ENCODE measurements at regions of chr1 and their contacts with region 1.

Region 1: DNA sequence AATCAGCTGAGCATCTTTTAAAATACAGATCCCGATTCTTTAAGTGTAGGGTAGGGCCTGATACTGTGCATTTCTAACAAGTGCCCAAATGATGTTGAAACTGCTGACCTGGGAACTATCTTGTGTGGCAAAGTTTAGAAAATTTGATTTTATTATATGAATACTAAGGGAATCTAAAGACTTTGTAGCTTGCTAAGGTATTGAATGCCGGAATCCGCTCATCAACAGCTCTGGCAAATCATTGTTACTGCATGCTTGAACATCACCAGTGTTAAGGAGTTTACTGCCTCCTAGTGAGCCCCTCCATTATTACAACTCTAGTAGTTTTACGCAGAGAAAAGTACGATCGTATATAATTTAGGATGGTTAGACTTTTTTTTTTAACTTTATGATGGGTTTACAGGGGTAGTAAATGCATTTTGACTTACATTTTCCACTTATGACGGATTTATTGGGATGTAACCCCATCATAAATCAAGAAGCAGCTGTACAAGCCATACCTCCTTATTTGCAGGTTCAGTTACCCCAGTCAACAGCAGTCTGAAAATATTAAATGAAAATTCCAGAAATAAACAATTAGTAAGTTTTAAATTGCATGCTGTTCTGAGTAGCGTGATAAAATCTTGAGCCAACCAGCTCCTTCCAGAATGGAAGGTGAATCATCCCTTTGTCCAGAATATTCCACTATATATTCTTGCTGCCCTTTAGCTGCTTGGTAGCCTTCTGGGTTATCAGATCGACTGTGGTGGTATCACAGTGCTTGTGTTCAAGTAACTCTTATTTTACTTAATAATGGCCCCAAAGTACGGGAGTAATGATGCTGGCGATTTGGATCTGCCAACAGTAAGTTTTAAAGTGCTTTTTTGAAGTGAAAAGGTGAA is 892 bp downstream of the TYW3 start:
- DNase-seq: peak; percentile 43
- H3K4me3 Mint-ChIP-seq: peak overlapping the region; percentile 87
- H3K27ac Mint-ChIP-seq: peak overlapping the region; percentile 94
- H3K4me1 Mint-ChIP-seq: peaks cover 39% of the 10 kb centered on the region
- H3K27me3 Mint-ChIP-seq: no peaks in the 10 kb centered on the region

Region 2: GRCh38 chr1:74197657-74198552 is 535.9 kb before region 1 on chr1 and contains the starts of genes FPGT and LRRIQ3:
- CTCF ChIA-PET with region 1: interaction called, 3 read pairs
- POLR2A ChIA-PET with region 1: no interaction called
- intact Hi-C with region 1: loop called (anchors 1 kb)
- DNase-seq: peak; percentile 96
- H3K4me3 Mint-ChIP-seq: peak within 1 kb of the TSS; percentile 82
- H3K27ac Mint-ChIP-seq: peak within 1 kb of the TSS; percentile 86
- H3K4me1 Mint-ChIP-seq: peaks cover 18% of the 10 kb centered on the region
- H3K27me3 Mint-ChIP-seq: no peaks in the 10 kb centered on the region
- total RNA-seq, gene FPGT: 9.0 to 10.4 TPM
- total RNA-seq, gene LRRIQ3: 1.1 to 1.7 TPM

Region 3: GRCh38 chr1:74681449-74681848 is 52.4 kb before region 1 on chr1:
- CTCF ChIA-PET with region 1: no interaction called
- POLR2A ChIA-PET with region 1: no interaction called
- intact Hi-C with region 1: loop called (anchors 5 kb)
- DNase-seq: no peak
- H3K4me3 Mint-ChIP-seq: no peak overlapping the region
- H3K27ac Mint-ChIP-seq: no peak overlapping the region
- H3K4me1 Mint-ChIP-seq: peaks cover 5% of the 10 kb centered on the region
- H3K27me3 Mint-ChIP-seq: peaks cover 15% of the 10 kb centered on the region

Region 4: GRCh38 chr1:74748960-74749359 is 15.1 kb after region 1 on chr1:
- CTCF ChIA-PET with region 1: interaction called, 5 read pairs
- POLR2A ChIA-PET with region 1: no interaction called
- intact Hi-C with region 1: loop called (anchors 1 kb)
- DNase-seq: no peak
- H3K4me3 Mint-ChIP-seq: no peak overlapping the region
- H3K27ac Mint-ChIP-seq: no peak overlapping the region
- H3K4me1 Mint-ChIP-seq: peaks cover 7% of the 10 kb centered on the region
- H3K27me3 Mint-ChIP-seq: no peaks in the 10 kb centered on the region

Region 5: DNA sequence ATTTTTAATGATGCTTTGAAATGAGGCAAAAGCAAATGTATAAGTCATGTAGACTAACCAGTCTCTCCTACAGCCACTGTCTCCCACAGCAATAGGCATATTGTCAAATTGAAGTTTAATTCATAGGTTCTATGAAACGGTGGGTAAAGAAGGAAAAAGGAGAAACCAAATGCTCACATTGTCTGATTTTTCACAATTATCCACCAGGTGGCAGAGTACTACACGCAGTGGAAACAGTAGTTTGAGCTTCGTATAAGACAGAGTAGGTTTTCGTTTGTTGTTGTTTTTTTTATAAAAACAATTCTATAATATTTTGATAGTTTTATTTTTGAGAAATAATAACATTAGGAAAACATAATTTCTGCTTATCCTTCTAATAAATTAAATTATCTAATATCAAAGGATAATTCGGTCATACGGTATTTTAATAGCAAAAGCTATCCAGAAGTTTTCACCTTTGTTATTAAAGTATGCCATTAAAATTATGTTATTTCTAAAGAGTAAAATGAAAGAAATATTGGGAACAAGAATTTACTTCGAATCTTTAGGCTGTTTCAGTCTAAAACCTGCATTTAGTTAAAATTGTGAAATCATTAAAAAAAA is 38.2 kb after region 1 on chr1:
- CTCF ChIA-PET with region 1: interaction called, 17 read pairs
- POLR2A ChIA-PET with region 1: no interaction called
- intact Hi-C with region 1: no loop called
- DNase-seq: no peak
- H3K4me3 Mint-ChIP-seq: no peak overlapping the region
- H3K27ac Mint-ChIP-seq: no peak overlapping the region
- H3K4me1 Mint-ChIP-seq: no peaks in the 10 kb centered on the region
- H3K27me3 Mint-ChIP-seq: peaks cover 10% of the 10 kb centered on the region

Region 6: DNA sequence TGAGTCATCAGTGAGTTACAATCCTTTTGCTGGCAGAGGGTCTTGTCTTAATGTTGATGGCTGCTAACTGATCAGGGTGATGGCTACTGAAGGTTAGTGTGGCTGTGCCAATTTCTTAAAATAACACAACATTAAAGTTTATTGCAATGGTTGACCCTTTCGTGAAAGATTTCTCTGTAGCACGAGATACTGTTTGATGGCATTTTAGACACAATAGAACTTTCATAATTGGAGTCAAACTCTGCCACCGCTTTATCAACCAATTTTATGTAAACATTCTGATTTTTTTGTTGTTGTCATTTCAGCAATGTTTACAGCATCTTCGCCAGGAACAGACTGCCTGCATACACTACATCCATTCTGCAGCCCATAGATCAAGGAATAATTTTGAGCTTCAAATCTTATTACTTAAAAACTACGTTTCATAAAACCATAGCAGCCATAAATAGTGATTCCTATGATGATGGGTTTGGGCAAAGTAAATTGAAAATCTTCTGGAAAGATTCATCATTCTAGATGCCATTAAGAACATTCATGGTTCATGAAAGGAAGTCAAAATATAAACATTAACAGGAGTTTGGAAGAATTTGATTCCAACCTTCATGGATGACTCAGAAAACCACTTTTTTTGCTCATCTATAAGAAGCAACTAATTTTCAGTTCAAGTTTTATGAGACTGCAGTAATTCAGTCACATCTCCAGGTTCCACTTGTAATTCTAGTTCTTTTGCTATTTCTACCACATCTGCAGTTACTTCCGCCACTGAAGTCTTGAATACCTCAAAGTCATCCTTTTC is 85.0 kb after region 1 on chr1:
- CTCF ChIA-PET with region 1: no interaction called
- POLR2A ChIA-PET with region 1: no interaction called
- intact Hi-C with region 1: no loop called
- DNase-seq: no peak
- H3K4me3 Mint-ChIP-seq: no peak overlapping the region
- H3K27ac Mint-ChIP-seq: no peak overlapping the region
- H3K4me1 Mint-ChIP-seq: no peaks in the 10 kb centered on the region
- H3K27me3 Mint-ChIP-seq: peaks cover 1% of the 10 kb centered on the region